ENCODE measurements at regions of chr3 and their contacts with region 1.

Region 1: DNA sequence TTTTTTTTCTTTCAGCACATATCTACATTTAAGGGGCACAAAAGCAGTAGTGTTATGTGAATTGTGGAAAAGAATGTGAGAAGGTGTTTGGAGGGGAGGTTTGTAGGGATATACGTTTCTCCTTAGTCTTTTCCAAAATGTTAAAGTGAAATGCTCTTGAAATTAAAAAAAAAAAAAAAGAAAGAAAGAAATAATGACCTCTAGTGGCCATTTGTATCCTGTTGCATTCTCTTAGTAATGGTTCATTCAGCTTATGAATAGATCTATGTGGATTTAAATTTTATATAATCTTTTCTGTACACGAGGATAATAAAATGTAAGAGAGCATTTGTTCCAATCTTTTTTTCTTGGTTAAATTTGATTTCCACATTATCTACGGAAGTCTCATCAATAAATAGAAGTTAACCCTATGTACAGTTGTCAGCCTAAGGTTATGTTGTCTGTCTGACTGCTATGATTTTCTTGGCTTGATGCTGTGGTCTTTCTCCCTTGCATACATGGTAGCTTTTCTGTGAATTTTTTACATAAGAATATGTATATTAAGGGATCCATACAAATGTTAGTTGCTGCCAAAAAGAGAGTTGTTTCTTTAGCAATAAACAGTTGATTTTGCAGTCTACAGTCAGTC is 1.7 kb downstream of the P2RY13 start:
- DNase-seq: no peak
- H3K4me3 Mint-ChIP-seq: no peak overlapping the region
- H3K27ac Mint-ChIP-seq: no peak overlapping the region
- H3K4me1 Mint-ChIP-seq: peaks cover 10% of the 10 kb centered on the region
- H3K27me3 Mint-ChIP-seq: no peaks in the 10 kb centered on the region
- CTCF ChIP-seq: peak; percentile 59

Region 2: DNA sequence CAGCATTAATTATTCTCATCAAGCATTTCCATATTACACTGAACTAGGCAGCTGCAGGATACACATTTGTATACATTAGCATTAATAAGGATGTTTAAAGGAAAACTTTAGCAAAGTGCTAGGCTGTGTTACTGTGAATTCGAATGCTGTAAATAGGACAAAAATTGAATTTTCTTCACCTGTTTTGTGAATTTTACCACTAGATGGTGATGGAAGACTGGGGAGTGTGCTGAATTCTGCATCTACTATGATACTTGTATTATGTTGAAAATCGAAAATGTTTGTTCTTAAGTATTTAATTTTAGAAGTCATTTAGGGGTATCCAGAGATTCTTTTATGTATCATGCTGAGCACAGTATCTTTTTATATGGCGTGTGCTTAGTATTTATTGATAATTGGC is 37.0 kb before region 1 on chr3:
- CTCF ChIA-PET with region 1: interaction called, 10 read pairs
- intact Hi-C with region 1: loop called (anchors 1 kb)
- DNase-seq: peak; percentile 25
- H3K4me3 Mint-ChIP-seq: no peak overlapping the region
- H3K27ac Mint-ChIP-seq: no peak overlapping the region
- H3K4me1 Mint-ChIP-seq: no peaks in the 10 kb centered on the region
- H3K27me3 Mint-ChIP-seq: no peaks in the 10 kb centered on the region
- CTCF ChIP-seq: peak; percentile 63

Region 3: DNA sequence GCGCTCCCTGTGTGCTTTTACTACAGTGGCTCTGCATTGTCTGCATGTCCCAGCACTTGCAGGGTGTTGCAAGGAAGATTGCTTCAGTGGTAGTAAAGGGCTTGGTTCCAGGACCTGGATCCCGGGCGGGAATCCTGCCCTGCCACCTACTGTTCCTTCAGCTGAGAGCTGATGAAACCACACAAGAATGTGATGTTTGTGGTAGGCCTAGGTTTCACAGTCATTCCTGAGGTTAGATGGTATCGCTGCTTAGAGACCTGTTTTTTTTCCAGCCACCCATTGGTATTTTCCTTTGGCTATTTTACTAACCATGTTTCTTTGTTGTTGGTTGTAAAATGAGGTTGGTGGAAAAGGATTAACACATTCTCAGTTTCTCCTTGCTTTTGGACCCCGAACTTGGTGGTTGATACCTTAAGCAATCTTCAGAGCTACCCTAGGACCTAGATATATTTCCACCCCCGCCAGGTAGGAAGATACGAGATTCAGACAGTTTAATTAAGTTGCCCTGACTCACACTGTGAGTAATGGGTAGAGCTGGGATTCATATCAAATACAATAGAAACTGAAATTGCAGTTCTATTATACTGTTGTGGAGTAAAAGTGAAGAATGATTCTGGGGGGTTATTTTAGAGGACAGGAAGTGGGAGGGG is 22.5 kb before region 1 on chr3:
- CTCF ChIA-PET with region 1: interaction called, 27 read pairs
- intact Hi-C with region 1: loop called (anchors 1 kb)
- DNase-seq: peak; percentile 91
- H3K4me3 Mint-ChIP-seq: peak overlapping the region; percentile 50
- H3K27ac Mint-ChIP-seq: peak overlapping the region; percentile 91
- H3K4me1 Mint-ChIP-seq: peaks cover 53% of the 10 kb centered on the region
- H3K27me3 Mint-ChIP-seq: no peaks in the 10 kb centered on the region
- CTCF ChIP-seq: no peak

Region 4: GRCh38 chr3:151316267-151316991 is 11.3 kb before region 1 on chr3 and contains the start of gene GPR87:
- CTCF ChIA-PET with region 1: interaction called, 12 read pairs
- intact Hi-C with region 1: no loop called
- DNase-seq: peak; percentile 66
- H3K4me3 Mint-ChIP-seq: peak within 1 kb of the TSS; percentile 10
- H3K27ac Mint-ChIP-seq: peak within 1 kb of the TSS; percentile 71
- H3K4me1 Mint-ChIP-seq: peaks cover 31% of the 10 kb centered on the region
- H3K27me3 Mint-ChIP-seq: no peaks in the 10 kb centered on the region
- CTCF ChIP-seq: no peak
- total RNA-seq, gene GPR87: 1.2 and 1.5 TPM in 2 replicates

Region 5: DNA sequence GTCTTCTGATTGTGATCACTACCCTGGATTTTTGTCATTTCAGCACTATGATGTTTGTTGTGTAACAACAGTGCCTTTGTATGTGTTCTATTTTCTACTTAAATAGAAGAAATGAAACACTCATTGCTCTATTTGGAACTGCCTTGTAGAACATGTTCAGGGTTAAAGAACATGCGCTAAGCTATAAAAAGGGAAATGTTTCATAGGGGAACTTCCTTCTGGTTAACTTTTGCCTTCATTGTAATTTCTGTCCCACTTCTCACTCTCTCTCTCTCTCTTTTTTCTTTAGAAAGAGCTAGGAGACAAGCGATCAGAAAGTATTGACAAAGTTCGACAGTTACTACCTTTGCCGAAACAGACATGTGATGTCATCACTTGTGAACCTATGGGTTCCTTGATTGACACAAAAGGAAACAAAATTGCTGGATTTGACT is 57.1 kb after region 1 on chr3 and contains the start of gene P2RY12:
- CTCF ChIA-PET with region 1: no interaction called
- intact Hi-C with region 1: no loop called
- DNase-seq: no peak
- H3K4me3 Mint-ChIP-seq: no peak within 1 kb of the TSS
- H3K27ac Mint-ChIP-seq: no peak within 1 kb of the TSS
- H3K4me1 Mint-ChIP-seq: no peaks in the 10 kb centered on the region
- H3K27me3 Mint-ChIP-seq: no peaks in the 10 kb centered on the region
- CTCF ChIP-seq: no peak
- total RNA-seq, gene P2RY12: not detected in 2 replicates

Measured in Calu3 (cell line).